Head of caudate nucleus (tissue), 42 donors: ENCODE measurements at regions of chr5 and their contacts with region 1.

Region 1: DNA sequence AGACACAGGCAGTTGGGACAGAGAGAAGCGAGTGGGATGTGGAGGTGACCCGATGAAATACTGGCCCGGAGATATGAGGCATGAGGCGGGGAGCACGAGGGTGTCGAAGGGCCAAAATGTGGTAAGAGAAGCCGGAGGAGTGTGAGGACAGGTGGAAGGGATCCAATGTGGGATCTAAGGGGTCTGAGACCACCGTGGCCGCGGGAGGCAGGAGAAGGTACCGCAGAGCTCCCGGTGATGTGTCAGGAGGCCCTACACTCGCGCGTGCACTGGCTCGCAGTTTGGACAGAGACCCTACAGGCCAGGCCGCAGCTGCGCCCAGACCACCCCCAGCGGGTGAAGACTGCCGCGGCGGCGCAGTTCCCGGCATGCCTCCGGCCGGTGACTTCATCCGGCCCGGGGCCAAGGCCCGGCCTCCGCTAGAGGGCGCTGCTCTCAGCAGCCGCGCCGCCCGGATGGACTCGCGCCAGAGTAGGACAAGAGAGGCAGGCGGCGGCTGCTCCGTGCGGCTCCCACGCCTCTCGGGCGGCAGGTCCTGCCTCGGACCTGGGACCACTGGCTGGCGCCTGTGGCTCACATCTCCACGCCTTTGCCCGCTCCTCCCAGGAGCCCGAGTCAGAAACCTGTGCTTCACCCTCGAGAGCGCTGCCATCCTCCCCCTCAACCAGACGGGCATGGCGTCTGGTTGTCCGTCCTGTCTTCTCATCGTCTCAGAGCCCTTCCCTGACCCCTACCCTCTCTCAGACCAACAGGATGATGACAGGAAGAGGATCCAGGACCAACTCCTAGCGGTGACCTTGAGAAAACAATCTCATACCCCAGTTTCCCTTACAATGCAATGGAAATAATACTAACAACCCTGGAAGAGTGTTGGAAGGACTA is 35.4 kb upstream of the STING1 start:
- DNase-seq: peak; percentile 80 to 97 (median 93)

Region 2: DNA sequence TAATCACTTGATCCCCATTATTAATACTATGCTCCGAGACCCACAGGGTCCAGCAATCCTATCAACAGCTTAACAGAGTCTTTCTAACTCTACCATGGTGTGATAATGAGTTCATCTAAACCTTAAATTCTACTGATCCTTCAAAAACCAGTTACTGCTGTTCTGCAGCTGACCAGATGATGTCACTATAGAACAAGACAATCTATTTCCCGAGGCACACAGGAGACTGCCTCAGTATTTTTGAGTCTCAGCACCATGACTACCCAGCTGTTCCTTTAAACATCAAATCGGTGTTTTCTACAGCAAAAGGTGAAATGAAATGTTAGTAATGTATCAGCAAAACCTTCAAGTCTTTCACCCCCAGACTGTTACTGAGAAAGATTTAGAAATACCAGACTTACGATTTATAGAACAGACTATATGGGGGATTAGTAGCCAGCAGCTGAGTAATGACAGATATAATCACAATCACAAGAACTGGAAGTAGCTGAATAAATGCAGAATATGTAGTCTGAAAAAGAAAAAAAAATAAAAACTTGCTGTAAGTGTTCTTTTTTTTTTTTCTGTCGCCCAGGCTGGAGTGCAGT is 95.5 kb before region 1 on chr5:
- intact Hi-C with region 1: loop called (anchors 5 kb)
- DNase-seq: peak in 23 of 42 donors; percentile 17 to 82 (median 55)

Region 3: GRCh38 chr5:139828207-139828895 is 310.4 kb after region 1 on chr5:
- intact Hi-C with region 1: no loop called
- DNase-seq: peak; percentile 33 to 88 (median 76)